ENCODE measurements at regions of chr5 and their contacts with region 1.

Region 1: GRCh38 chr5:77697692-77698091 is 59.2 kb upstream of the OTP start:
- DNase-seq: no peak
- H3K4me3 Mint-ChIP-seq: no peak overlapping the region
- H3K27ac Mint-ChIP-seq: no peak overlapping the region
- H3K4me1 Mint-ChIP-seq: peaks cover 31% of the 10 kb centered on the region
- H3K27me3 Mint-ChIP-seq: no peaks in the 10 kb centered on the region

Region 2: DNA sequence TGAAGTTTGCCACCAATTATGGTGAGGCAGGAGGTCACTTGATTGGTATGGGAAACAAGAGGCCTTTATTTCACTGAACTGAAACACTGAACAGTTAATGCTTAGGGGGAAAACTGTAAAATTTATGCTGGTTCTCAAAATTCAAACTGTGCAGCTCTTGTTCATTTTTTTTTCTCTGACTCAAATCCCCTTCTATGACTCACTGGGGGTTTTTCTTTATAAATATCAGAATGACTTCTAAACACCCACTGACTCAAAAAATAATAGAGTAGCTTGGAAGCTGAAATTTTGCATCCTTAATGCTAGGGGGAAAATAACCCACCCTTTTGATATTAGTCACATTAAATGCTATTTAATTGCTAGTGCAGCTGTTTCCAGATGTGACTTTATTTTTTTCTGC is 35.1 kb before region 1 on chr5:
- intact Hi-C with region 1: loop called (anchors 1 kb)
- DNase-seq: no peak
- H3K4me3 Mint-ChIP-seq: no peak overlapping the region
- H3K27ac Mint-ChIP-seq: no peak overlapping the region
- H3K4me1 Mint-ChIP-seq: peaks cover 10% of the 10 kb centered on the region
- H3K27me3 Mint-ChIP-seq: peaks cover 9% of the 10 kb centered on the region

Measured in activated T-helper 2 cell treated with anti-CD3 and anti-CD28 coated beads, Interferon-gamma antibody, Interleukin-2, Interleukin-4, amounts not matched to agents 10 μg/mL and 5 μg/mL and 100 μg/mL, durations not matched to agents 14 hours and 24 hours and 36 hours (primary cell).